PC-9 (cell line): ENCODE measurements at regions of chr1 and their contacts with region 1.

Region 1: DNA sequence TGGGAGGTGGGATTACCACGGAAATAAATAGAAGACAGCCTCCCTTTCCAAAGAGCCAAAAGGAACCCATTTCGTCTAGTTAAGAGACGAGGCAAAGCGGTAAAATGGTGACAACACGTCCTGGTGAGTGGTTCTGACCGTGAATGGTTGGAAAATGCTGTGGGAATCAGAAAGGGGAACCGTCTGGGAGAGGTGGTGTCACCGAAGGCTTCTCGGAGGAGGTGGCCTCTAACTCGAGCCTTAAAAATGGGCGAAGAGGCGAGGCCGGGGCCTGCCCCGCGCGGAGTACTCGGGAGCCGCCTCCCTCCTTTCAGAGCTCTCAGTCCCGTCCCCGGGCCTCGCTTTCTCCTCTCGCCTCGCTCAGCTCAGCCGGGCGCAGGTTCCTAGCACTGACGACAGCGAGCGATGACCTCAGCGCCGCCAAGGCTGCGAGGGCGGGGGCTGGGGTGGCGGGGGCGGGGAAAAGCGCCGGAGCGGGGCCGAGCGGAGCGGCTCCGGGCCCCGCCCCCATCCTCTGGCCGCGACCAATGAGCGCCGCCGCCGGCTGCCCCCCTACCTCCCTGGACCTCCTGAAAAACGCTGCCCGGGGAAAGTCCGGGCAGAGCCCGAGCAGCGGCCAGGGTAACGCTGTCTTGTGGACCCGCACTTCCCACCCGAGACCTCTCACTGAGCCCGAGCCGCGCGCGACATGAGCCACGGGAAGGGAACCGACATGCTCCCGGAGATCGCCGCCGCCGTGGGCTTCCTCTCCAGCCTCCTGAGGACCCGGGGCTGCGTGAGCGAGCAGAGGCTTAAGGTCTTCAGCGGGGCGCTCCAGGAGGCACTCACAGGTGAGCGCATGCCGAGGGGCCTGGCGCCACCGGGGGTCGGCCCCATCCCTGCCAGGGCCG is at the start of gene BTG2:
- DNase-seq: peak; percentile 60 to 83
- H3K4me3 ChIP-seq: peak within 1 kb of the TSS; percentile 82
- H3K27ac ChIP-seq: no peak within 1 kb of the TSS
- H3K4me1 ChIP-seq: no peaks in the 10 kb centered on the region; the same call in 1 of the 2 replicates
- H3K27me3 ChIP-seq: peaks cover 11% of the 10 kb centered on the region
- CTCF ChIP-seq: no peak
- total RNA-seq, gene BTG2: 11.1 and 13.8 TPM in 2 replicates

Region 2: DNA sequence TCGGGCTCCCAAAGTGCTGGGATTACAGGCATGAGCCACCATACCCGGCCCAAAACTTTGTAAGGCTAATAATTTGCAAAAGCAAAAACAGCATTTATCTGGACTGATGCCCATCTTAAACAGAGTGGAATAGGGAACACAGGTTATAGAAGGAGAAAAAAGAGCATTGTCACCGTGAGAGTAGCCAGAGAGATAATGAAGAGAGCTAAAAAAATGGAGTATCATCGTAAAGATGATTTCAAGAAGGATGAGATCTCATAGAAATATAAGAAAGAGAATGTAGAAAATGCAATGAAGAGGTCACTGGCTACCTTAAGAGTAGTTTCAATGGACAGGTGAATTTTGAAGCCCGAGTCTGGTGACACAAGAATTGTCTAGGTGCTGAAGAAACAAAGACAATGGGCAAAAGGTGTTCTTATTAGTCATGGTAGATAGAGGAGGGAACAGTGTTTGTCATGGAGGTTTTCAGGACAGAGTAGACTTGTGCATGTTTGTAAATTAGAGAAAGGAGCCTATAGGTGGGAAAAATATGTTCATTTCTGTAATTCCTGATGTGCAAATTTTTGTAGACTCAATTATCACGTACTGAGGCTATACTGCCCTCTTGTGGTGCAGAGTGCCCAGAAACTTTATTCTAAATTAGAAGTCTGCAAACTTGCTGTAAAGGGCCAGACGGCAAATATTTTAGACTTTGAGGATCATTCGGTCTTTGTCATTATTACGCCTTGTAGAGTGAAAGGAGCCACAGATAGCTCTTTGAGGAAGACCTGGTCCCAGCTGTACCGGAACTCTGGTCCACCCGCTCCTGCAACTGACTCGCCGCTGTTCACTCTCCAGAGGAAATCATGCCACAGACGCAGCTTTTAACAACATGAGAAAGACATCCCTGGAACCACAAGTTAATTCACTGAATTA is 306.1 kb before region 1 on chr1:
- CTCF ChIA-PET with region 1: no interaction called
- POLR2A ChIA-PET with region 1: no interaction called
- intact Hi-C with region 1: no loop called
- DNase-seq: peak; percentile 54
- H3K4me3 ChIP-seq: no peak overlapping the region
- H3K27ac ChIP-seq: no peak overlapping the region
- H3K4me1 ChIP-seq: peaks cover 14% of the 10 kb centered on the region
- H3K27me3 ChIP-seq: no peaks in the 10 kb centered on the region
- CTCF ChIP-seq: peak; percentile 90

Region 3: DNA sequence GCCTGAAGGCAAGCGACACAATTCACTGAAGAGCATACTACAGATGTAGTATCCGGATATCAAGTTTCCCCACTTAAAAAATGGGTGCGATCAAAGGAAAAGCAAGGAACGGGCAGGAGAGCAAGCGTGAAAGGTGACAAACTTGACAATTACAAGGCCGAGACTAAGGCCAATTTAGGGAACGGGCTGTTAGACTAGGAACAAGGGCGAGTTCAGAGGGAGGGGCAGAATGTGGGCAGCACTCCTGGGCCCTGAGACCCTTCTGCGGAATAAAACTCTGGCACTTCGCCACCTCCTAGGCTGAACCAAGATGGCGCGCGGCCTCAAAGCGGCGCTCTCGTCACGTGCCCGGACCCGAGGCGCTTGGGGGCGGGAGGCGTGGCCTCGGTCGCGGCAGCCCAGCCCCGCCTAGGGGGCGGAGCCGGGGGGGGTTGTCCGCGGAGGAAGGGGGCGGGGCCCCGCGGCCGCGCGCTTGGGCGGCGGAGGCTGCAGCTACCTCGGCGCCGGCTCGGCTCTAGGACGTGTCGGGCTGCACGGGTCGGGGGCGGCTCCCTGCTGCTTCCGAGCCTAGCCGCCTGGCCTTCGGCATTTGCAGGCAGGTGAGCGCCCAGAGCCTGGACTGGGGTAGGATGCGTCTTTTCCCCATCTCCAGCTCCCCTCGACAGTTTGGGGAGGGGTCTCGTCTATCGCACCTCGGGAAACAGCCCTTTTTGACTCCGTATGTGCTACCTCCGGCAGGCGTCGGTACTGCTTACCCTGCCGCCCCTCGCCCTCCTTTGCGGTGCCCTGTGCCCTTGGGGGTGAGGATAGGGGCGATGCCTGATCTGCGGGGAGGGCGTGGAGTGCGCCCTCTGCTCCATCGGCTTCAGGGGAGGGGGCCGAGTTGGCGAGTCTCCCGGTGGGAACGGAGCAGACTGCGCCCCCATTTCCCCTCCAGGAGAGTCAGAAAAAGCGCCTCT is 278.9 kb before region 1 on chr1 and contains the start of gene PPFIA4:
- CTCF ChIA-PET with region 1: interaction called, 14 read pairs
- POLR2A ChIA-PET with region 1: no interaction called
- intact Hi-C with region 1: no loop called
- DNase-seq: peak; percentile 47 to 84
- H3K4me3 ChIP-seq: peak within 1 kb of the TSS; percentile 60
- H3K27ac ChIP-seq: no peak within 1 kb of the TSS
- H3K4me1 ChIP-seq: peaks cover 5% of the 10 kb centered on the region
- H3K27me3 ChIP-seq: no peaks in the 10 kb centered on the region
- CTCF ChIP-seq: no peak
- total RNA-seq, gene PPFIA4: 1.2 and 5.0 TPM in 2 replicates

Region 4: DNA sequence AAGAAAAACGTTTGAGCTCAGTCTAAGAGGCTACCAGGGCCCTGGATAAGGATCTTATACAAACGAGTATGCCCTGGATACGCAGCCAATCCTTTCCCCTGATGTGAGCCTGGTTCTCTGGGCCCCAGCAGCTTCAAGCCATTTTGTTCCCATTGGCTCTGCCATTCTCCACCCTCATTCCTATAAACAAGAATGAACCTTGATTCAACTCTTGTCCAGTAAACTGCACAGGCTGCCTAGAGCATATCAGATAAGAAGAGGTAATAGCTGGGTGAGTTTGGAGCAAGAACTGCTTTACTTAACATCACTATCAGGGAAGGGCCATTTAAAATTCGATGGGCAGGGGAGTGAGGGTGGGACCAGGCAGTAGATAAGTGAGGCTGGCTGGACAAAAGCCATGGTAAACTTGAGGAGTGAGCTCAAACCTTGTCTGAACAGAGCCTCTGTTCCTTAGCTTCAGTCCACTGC is 11.5 kb after region 1 on chr1:
- CTCF ChIA-PET with region 1: interaction called, 3 read pairs
- POLR2A ChIA-PET with region 1: interaction called, 13 read pairs
- intact Hi-C with region 1: no loop called
- DNase-seq: peak; percentile 55 to 71
- H3K4me3 ChIP-seq: no peak overlapping the region
- H3K27ac ChIP-seq: no peak overlapping the region
- H3K4me1 ChIP-seq: peaks cover 4% of the 10 kb centered on the region
- H3K27me3 ChIP-seq: 0 out of 2 replicates have a peak, but pooled peaks cover 5% of the 10 kb centered on the region
- CTCF ChIP-seq: no peak

Region 5: GRCh38 chr1:203326830-203327683 is 21.9 kb after region 1 on chr1:
- CTCF ChIA-PET with region 1: interaction called, 10 read pairs
- POLR2A ChIA-PET with region 1: interaction called, 3 read pairs
- intact Hi-C with region 1: loop called (anchors 1 kb)
- DNase-seq: peak; percentile 77 to 94
- H3K4me3 ChIP-seq: peak overlapping the region; percentile 63
- H3K27ac ChIP-seq: peak overlapping the region; percentile 61
- H3K4me1 ChIP-seq: peaks cover 22% of the 10 kb centered on the region
- H3K27me3 ChIP-seq: peaks cover 17% of the 10 kb centered on the region; the same call in 1 of the 2 replicates
- CTCF ChIP-seq: no peak

Region 6: DNA sequence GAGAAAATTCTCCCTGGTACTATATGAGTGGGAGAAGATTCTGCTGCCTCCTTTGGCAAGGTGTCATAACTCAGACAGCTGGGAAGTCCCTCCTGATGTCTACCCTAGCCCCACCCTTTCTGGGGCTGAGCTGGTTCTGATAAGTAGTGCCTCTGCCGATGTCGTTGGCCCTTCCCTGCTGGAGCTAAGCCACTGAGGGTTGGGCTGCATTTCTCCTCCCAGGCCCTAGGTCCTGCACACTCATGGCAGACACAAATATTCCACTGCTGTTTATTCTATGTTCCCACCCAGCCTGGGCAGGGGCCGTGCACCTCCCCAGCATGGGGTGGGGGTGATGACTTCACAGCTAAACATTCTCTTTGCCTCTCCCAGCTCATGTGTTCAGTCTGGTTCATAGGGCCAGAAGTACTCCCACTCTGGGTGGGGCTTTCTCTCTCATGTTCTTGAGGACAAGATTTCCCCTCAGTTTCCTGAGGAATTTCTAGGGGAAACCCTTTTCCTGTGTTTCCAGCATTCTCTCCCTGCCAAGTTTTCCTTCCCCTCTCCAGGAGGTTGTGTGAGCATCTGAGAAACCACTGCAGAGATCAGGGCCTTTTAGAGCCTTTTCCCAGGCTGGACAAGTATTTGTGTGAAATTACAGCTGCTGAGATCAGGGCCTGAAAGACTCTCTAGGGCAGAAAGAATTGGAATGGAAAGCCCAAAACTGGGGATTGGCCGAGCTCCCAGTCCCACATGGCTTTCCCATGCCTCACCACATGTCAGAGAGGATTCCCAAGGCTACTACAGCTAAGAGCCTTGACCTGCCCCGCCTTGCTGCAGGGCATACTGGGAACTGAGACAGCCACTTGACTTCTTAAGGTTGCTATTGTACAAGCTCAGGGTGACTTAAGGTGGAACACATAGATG is 387.7 kb after region 1 on chr1:
- CTCF ChIA-PET with region 1: no interaction called
- POLR2A ChIA-PET with region 1: interaction called, 12 read pairs
- intact Hi-C with region 1: no loop called
- DNase-seq: peak; percentile 79 to 80
- H3K4me3 ChIP-seq: no peak overlapping the region
- H3K27ac ChIP-seq: peak overlapping the region; percentile 80
- H3K4me1 ChIP-seq: peaks cover 17% of the 10 kb centered on the region
- H3K27me3 ChIP-seq: no peaks in the 10 kb centered on the region
- CTCF ChIP-seq: no peak